Natural killer cell (primary cell): ENCODE measurements at regions of chr7 and their contacts with region 1.

Region 1: DNA sequence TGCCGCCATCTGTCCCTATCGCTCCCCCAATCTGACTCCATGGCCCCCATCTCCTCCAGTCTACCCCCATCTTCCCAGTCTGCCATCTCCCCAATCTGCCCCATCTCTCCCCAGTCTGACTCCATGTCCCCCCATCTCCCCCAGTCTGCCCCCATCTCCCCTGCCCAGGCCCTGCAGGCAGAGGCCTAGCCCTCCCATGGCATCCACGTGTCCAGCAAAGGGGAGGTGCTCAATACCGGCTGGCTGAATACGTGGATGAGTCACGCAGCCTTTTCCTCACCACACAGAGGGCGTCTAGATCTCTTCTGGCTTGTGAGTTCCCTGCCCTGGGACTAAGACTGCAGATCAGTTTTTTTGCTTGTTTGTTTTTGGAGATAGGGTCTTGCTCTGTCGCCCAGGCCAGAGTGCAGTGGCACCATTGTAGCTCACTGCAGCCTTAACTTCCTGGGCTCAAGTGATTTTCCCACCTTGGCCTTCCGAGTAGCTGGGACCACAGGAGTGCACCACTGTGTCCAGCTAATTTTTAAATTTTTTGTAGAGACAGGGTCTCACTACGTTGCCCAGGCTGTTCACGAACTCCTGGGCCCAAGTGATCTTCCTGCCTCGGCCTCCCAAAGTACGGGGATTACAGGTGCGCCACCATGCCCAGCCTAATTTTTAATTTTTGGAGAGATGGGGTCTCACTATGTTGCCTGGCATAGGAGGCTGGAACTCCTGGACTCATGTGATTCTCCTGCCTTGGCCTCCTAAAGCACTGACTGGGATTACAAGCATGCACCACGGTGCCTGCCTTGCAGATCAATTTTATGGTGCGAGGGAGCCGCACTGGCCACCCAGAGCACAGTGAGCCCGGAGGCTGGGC is 15.3 kb upstream of the GPR146 start:
- DNase-seq: peak; percentile 42 to 70
- ATAC-seq: peak; percentile 68 to 75 (median 71)
- H3K4me3 ChIP-seq: peak overlapping the region; percentile 30
- H3K4me3 Mint-ChIP-seq: peak overlapping the region; percentile 81
- H3K27ac ChIP-seq: peak overlapping the region; percentile 60
- H3K27ac Mint-ChIP-seq: peak overlapping the region; percentile 34 to 86
- H3K4me1 ChIP-seq: peaks cover 69% of the 10 kb centered on the region
- H3K4me1 Mint-ChIP-seq: peaks cover 34 to 47% of the 10 kb centered on the region in 2 donors
- H3K27me3 ChIP-seq: no peaks in the 10 kb centered on the region
- H3K27me3 Mint-ChIP-seq: no peaks in the 10 kb centered on the region
- CTCF ChIP-seq: no peak

Region 2: DNA sequence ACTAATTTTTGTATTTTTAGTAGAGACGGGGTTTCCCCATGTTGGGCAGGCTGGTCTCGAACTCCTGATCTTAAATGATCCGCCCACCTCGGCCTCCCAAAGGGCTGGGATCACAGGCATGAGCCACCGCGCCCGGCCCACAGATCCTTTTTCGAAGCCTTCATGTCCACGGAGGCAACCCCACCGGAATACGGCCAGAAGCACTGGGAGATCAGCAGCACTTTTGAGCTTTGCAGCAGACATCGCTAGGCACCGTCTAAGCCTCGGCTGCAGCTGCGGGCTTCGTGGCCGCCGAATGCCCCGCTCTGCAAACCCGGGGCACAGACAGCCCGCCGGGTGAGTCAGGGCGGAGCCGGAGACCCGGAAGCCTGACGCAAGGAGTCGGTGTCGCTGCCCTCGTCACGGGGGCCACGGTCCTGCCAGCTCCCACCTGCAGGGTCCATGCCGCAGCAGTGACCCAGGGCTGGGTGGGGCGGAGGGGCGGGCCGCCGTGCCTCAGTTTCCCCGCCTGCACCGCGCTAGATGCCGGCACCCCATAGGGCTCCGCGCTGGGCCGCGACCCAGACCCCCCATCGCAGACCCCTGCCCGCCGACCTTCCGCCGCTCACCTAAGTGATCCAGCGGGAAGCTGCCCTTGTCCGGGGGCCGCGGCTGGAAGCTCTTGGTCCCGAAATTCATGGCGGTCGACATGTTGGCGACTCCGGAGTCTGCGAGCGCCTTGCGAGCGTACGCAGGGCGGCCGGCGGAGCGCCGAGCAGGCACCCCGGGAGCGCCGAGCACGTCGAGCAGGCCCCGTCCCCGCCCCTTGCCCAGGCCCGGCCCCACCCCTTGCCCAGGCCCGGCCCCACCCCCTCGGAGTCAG is 54.0 kb before region 1 on chr7 and contains the start of gene COX19:
- intact Hi-C with region 1: no loop called
- DNase-seq: peak; percentile 86 to 95
- ATAC-seq: peak; percentile 87 to 98 (median 89)
- H3K4me3 ChIP-seq: peak within 1 kb of the TSS; percentile 80
- H3K4me3 Mint-ChIP-seq: peak within 1 kb of the TSS; percentile 90
- H3K27ac ChIP-seq: peak within 1 kb of the TSS; percentile 95
- H3K27ac Mint-ChIP-seq: peak within 1 kb of the TSS; percentile 89 to 93
- H3K4me1 ChIP-seq: peaks cover 27% of the 10 kb centered on the region
- H3K4me1 Mint-ChIP-seq: peaks cover 17 to 21% of the 10 kb centered on the region in 2 donors
- H3K27me3 ChIP-seq: no peaks in the 10 kb centered on the region
- H3K27me3 Mint-ChIP-seq: no peaks in the 10 kb centered on the region
- CTCF ChIP-seq: no peak
- total RNA-seq, gene COX19: 33.6 to 38.3 (median 33.6) TPM

Region 3: DNA sequence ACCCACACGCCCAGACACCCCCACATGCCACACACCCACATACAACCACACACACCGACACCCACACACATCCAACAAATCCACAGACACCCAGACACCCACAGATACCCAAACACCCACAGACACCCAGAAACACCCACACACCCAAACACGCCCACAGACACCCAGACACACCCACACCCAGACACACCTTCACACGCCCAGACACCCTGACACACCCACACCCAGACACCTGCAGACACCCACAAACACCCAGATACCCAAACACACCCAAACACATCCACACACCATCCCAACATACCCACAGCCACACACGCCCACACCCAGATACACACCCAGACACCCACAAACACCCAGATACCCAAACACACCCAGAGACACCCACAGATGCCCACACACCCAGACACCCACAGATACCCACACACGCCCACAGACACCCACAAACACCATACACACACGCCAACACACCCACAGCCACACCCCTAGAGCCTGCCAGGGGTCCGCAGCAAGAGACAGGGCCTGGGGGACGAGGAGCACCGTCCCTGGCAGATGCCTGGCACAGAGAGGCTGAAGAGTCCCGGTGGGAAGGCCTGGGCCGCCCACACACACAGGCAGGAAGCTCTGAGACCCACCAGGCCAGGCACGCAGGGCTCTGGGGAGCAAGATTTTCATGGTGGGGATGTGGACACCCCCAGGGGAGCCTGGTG is 17.6 kb before region 1 on chr7:
- intact Hi-C with region 1: loop called (anchors 1 kb)
- DNase-seq: peak; percentile 44 to 46
- ATAC-seq: peak; percentile 44 to 66 (median 63)
- H3K4me3 ChIP-seq: no peak overlapping the region
- H3K4me3 Mint-ChIP-seq: peak overlapping the region; percentile 62
- H3K27ac ChIP-seq: peak overlapping the region; percentile 70
- H3K27ac Mint-ChIP-seq: peak overlapping the region; percentile 85 to 98
- H3K4me1 ChIP-seq: peaks cover 28% of the 10 kb centered on the region
- H3K4me1 Mint-ChIP-seq: peaks cover 17 to 29% of the 10 kb centered on the region in 2 donors
- H3K27me3 ChIP-seq: no peaks in the 10 kb centered on the region
- H3K27me3 Mint-ChIP-seq: no peaks in the 10 kb centered on the region
- CTCF ChIP-seq: no peak

Region 4: DNA sequence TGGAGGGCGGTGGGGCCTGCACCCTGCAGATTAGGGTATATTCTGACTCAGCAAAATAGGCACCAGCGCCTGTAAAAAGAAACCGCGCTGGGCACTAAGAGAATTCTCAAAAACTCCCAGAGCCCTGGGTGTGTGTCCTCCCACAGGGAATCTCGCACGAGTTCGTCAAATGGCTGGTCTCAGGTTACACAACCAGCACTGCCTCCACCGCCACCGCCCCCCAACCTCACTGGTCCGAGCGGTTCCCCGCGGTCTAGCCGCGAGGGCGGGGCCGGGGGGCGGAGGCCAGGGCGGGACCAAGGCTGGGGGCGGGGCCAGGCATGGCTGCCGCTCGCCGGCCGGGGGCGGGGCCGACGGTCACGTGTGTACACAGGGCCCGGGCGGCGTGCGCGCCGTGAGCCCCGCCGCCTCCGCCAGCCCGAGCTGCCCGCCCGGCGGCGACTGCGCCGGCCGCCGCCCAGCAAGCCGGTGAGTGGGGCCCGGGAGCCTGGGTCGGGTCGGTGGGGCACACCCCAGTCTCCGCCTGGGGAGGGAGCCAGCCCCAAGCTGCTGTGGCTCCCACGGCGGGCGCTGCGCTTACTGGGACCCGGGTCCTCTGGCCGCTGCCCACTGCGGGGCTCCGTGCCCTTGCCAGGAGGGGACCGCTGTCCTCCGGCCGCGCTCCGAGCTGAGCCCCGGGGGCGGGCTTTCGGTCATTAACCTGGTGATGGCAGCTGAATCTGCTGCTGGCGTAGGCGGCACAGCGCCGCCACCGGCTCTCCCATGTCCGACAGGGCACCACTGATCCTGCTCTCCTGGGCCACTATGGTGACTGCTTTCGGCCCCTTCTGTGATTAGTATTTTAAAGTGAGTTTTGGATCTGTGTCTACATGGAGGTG is 15.4 kb after region 1 on chr7 and contains the start of gene GPR146:
- intact Hi-C with region 1: loop called (anchors 1 kb)
- DNase-seq: peak; percentile 86 to 93
- ATAC-seq: peak; percentile 69 to 94 (median 80)
- H3K4me3 ChIP-seq: peak within 1 kb of the TSS; percentile 49
- H3K4me3 Mint-ChIP-seq: peak within 1 kb of the TSS; percentile 90
- H3K27ac ChIP-seq: peak within 1 kb of the TSS; percentile 23
- H3K27ac Mint-ChIP-seq: peak within 1 kb of the TSS; percentile 54 to 58
- H3K4me1 ChIP-seq: peaks cover 59% of the 10 kb centered on the region
- H3K4me1 Mint-ChIP-seq: peaks cover 39 to 47% of the 10 kb centered on the region in 2 donors
- H3K27me3 ChIP-seq: peaks cover 9% of the 10 kb centered on the region
- H3K27me3 Mint-ChIP-seq: peaks cover 0 to 9% of the 10 kb centered on the region in 2 donors
- CTCF ChIP-seq: peak; percentile 62
- total RNA-seq, gene GPR146: 2.3 to 4.5 (median 2.5) TPM